Activated naive CD4-positive, alpha-beta T cell treated with anti-CD3 and anti-CD28 coated beads for 36 hours (primary cell): ENCODE measurements at regions of chr16 and their contacts with region 1.

Region 1: GRCh38 chr16:67841764-67842508 is at the start of gene THAP11:
- DNase-seq: peak; percentile 97
- H3K4me3 Mint-ChIP-seq: peak within 1 kb of the TSS; percentile 91
- H3K27ac Mint-ChIP-seq: peak within 1 kb of the TSS; percentile 98
- H3K4me1 Mint-ChIP-seq: peaks cover 33% of the 10 kb centered on the region
- H3K27me3 Mint-ChIP-seq: no peaks in the 10 kb centered on the region
- total RNA-seq, gene THAP11: 19.9 to 20.6 TPM

Region 2: DNA sequence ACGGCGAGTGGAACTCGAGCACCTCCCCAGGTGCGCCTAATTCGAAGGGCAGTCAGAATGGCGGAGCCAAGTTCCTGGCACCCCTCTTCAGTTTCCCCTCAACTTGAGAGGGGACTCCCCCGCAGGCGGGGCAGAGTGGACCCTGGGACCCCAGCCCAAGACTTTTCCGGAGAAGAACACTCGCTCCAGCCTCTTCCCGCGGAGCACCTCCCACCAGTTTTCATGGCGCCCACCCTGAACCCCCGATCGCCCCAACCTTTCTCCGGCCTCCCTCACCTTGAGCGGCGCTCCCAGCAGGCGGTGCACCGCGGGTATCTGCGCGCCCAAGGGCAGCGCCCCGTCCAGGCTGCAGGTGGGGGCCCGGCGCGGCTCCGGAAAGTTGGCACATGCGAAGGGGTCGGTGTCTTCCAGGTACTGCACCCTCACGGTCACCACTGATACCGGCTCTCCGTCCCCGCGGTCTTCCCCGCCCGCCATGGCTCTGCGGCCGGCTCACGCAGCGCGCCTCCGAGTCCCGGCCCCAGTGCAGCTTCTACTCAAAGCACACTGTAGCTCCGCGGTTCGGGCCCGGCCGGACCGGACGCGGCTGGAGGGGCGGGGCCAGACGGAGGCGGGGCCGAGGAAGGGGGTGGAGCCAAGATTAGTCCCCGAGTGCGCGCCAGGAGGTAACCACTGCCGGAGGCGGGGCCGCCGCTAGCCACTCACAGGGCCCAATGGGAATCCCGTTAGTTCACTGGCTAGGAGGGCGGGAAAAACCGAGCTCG is 594.8 kb before region 1 on chr16 and contains the start of gene FHOD1:
- CTCF ChIA-PET with region 1: no interaction called
- intact Hi-C with region 1: loop called (anchors 5 kb)
- DNase-seq: peak; percentile 99
- H3K4me3 Mint-ChIP-seq: peak within 1 kb of the TSS; percentile 89
- H3K27ac Mint-ChIP-seq: peak within 1 kb of the TSS; percentile 76
- H3K4me1 Mint-ChIP-seq: peaks cover 51% of the 10 kb centered on the region
- H3K27me3 Mint-ChIP-seq: peaks cover 8% of the 10 kb centered on the region
- total RNA-seq, gene FHOD1: 70.7 to 73.7 TPM

Region 3: DNA sequence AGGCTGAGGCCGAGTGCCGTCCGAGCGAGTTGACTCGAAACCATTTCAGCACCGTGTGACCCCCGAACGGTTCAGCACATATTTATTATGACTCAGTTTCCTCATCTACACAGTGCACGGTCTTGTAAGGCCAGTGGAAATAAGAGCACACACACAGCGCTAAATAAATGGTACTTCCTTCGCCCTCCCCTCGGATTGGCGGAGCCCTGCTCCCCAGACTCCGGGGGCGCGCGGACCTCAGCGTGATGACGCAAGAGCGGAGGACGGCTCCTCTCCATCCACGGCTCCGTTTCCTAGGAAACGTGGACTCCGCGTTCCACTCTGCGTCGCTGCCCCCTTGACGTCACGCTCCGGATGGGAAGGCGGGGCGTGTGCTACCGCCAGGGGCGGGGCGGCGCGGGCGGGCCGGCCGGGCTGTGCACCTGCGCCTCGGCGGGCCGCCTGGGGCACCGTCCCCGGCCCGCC is 181.3 kb before region 1 on chr16 and contains the start of gene PARD6A:
- CTCF ChIA-PET with region 1: interaction called, 4 read pairs
- intact Hi-C with region 1: loop called (anchors 1 kb)
- DNase-seq: peak; percentile 97
- H3K4me3 Mint-ChIP-seq: peak within 1 kb of the TSS; percentile 90
- H3K27ac Mint-ChIP-seq: peak within 1 kb of the TSS; percentile 92
- H3K4me1 Mint-ChIP-seq: peaks cover 21% of the 10 kb centered on the region
- H3K27me3 Mint-ChIP-seq: no peaks in the 10 kb centered on the region
- total RNA-seq, gene PARD6A: 7.3 to 8.4 TPM

Region 4: GRCh38 chr16:67694611-67695010 is 147.3 kb before region 1 on chr16:
- CTCF ChIA-PET with region 1: no interaction called
- intact Hi-C with region 1: no loop called
- DNase-seq: no peak
- H3K4me3 Mint-ChIP-seq: no peak overlapping the region
- H3K27ac Mint-ChIP-seq: no peak overlapping the region
- H3K4me1 Mint-ChIP-seq: peaks cover 2% of the 10 kb centered on the region
- H3K27me3 Mint-ChIP-seq: no peaks in the 10 kb centered on the region

Region 5: GRCh38 chr16:67865316-67865715 is 23.4 kb after region 1 on chr16:
- CTCF ChIA-PET with region 1: no interaction called
- intact Hi-C with region 1: loop called (anchors 2 kb)
- DNase-seq: peak; percentile 39
- H3K4me3 Mint-ChIP-seq: no peak overlapping the region
- H3K27ac Mint-ChIP-seq: no peak overlapping the region
- H3K4me1 Mint-ChIP-seq: peaks cover 7% of the 10 kb centered on the region
- H3K27me3 Mint-ChIP-seq: no peaks in the 10 kb centered on the region

Region 6: DNA sequence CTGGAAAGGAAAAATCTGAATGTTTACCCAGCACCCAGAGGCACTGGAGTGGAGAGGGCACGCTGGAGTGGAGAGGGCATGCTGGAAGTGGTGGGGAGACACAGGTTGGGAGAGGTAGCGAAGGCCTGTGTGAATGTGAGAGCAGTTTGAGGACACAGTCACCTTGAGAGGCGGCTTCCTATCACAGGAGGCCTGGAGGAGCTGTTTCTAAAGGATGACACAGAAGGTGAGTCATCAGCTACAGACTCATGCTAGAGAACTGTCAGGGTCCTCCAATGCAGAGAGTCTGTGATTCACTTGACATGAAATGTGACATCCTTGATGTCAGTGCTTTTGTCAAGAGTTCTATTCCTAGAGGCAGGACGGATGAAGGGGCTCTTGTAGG is 75.9 kb after region 1 on chr16:
- CTCF ChIA-PET with region 1: no interaction called
- intact Hi-C with region 1: loop called (anchors 2 kb)
- DNase-seq: peak; percentile 81
- H3K4me3 Mint-ChIP-seq: no peak overlapping the region
- H3K27ac Mint-ChIP-seq: peak overlapping the region; percentile 89
- H3K4me1 Mint-ChIP-seq: peaks cover 38% of the 10 kb centered on the region
- H3K27me3 Mint-ChIP-seq: no peaks in the 10 kb centered on the region